Activated CD4-positive, alpha-beta T cell treated with anti-CD3 and anti-CD28 coated beads for 36 hours (primary cell): ENCODE measurements at regions of chr1 and their contacts with region 1.

Region 1: DNA sequence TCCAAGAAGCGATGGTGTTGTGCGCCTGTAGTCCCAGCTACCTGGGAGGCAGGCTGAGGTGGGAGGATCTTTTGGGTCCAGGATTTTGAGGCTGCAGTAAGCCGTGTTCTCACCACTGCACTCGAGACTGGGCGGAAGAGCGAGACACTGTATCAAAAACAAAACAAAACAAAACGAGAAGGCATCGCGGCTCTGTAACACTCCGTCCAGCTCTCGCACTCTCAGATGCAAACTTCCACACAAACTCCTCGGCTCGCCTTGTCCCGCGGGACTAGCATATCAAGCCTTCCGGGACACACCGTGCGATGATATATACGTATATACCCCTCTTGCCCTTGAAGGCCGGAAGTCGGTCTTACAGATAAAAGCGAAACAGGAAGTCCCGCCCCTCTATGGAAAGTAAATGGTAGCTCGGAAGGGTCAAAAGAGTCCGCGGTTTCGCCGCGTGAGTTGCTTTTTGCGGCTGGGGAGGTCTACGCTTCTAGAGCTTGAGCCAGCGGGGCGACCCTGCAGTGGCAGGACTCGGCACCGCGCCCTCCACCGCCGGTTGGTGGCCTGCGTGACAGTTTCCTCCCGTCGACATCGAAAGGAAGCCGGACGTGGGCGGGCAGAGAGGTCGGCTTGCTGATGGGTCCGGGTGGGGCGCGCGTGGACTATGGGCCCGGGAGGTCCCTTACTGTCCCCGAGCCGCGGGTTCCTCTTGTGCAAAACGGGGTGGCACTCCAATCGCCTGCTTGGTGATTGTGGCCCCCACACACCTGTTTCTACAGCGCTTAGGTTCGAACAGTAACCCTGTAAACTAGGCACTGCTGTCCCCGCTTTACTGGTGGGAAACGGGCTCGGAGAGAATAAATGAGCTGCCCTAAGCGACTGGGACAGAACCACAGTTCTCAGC is at the start of gene COA6:
- DNase-seq: peak; percentile 92
- ATAC-seq: peak; percentile 89
- H3K4me3 Mint-ChIP-seq: peak within 1 kb of the TSS; percentile 98
- H3K27ac Mint-ChIP-seq: peak within 1 kb of the TSS; percentile 99
- H3K4me1 Mint-ChIP-seq: peaks cover 56% of the 10 kb centered on the region
- H3K27me3 Mint-ChIP-seq: no peaks in the 10 kb centered on the region
- total RNA-seq, gene COA6: 56.5 to 69.5 TPM

Region 2: GRCh38 chr1:232950197-232951176 is 1422.8 kb before region 1 on chr1 and contains the start of gene NTPCR:
- CTCF ChIA-PET with region 1: no interaction called
- POLR2A ChIA-PET with region 1: no interaction called
- intact Hi-C with region 1: loop called in 1 of 2 experiments (anchors 10 kb)
- DNase-seq: peak; percentile 98
- ATAC-seq: peak; percentile 91
- H3K4me3 Mint-ChIP-seq: peak within 1 kb of the TSS; percentile 90
- H3K27ac Mint-ChIP-seq: peak within 1 kb of the TSS; percentile 95
- H3K4me1 Mint-ChIP-seq: peaks cover 35% of the 10 kb centered on the region
- H3K27me3 Mint-ChIP-seq: no peaks in the 10 kb centered on the region
- total RNA-seq, gene NTPCR: 37.4 to 51.9 TPM

Region 3: DNA sequence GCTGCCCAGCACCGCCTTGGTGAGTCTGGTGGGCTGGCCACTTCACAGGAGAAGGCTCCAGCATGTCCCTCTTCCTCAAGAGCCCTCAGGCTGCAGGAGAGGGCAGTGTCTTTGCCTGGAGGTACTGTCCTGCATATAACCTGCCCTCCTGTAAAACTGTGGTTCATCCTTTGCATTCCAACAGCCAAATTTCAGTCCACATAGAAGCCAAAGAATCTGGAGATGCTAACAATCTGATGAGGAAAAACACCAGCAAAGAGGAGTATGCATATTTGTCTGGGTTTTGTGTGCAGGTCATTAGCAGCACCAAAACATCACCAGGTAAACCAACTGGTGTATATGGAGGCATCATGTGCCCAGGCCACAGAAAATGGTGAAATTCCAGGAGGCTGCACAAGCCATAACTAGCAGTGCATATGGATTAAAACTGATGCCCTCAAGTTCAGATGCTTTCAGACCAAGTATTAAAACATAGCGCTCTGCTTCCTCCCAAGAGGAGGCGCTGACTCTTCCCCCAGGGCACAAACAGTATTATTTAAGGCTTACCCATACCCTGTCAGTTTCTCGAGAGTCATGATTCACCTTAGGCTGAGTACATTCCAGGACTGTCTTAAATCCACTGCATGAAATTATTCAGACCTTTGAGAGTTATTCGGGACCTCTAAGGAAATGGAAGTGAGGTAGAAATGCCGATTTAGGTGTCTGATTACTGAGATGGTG is 150.6 kb before region 1 on chr1:
- CTCF ChIA-PET with region 1: no interaction called
- POLR2A ChIA-PET with region 1: no interaction called
- intact Hi-C with region 1: no loop called
- DNase-seq: no peak
- ATAC-seq: no peak
- H3K4me3 Mint-ChIP-seq: no peak overlapping the region
- H3K27ac Mint-ChIP-seq: no peak overlapping the region
- H3K4me1 Mint-ChIP-seq: no peaks in the 10 kb centered on the region
- H3K27me3 Mint-ChIP-seq: no peaks in the 10 kb centered on the region

Region 4: DNA sequence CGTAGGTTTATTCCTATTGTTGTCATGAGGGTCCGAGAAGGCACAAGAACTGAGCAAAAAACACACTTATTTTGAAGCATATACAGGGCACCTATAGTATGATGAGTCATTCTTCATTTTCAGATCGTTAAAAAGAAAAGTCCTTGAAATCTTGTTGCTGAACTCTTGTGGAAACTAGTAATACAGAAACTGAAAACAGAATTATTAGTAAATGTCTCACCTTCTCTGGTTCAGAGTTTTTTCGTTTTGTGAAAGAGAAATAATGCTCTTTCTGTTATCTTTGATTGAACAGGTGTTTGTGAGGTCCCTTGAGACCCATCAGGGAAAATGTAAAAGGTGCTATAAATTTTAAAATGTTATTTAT is 102.1 kb before region 1 on chr1:
- CTCF ChIA-PET with region 1: no interaction called
- POLR2A ChIA-PET with region 1: no interaction called
- intact Hi-C with region 1: loop called (anchors 1 to 5 kb)
- DNase-seq: no peak
- ATAC-seq: peak; percentile 93
- H3K4me3 Mint-ChIP-seq: no peak overlapping the region
- H3K27ac Mint-ChIP-seq: no peak overlapping the region
- H3K4me1 Mint-ChIP-seq: peaks cover 30% of the 10 kb centered on the region
- H3K27me3 Mint-ChIP-seq: peaks cover 19% of the 10 kb centered on the region

Region 5: DNA sequence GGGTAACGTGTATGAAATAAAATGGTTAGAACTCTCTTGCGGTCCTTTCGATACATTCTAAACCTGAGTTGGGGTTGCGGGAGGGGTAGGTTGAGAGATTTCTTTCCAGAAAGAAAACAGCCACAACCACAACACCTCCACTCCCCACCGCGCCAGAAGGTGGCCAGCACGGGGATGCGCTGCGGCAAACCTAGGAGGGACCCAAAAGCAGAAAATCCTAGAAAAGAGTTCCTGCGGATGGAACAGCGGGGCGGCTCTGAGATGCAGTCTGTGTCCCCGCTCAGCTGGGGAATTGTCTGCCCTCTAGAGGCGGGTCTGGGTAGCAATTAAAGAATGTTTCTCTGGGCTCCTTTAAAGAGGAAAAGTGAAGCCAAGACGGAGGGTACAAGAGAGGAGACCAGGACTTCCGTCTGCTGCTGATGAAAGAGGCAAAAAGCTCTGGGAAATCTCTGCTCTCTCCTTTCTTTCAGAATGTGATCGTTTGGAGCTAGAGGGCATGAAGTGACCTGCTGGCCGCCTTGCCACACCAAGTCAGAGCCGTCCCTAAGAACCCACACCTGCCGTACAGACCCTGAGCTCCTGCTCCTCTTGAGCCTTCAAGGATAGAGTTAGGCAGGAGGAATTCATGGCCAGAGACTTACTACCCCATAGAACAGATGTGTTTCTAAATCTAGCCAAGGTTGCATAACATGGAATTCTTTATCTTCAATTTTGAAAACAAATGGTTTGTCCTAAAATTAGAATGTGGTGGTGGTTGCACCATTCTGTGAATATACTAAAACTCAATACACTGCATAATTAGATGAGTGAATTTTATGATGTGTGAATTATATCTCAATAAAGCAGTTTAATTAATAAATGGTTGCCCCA is 46.6 kb before region 1 on chr1:
- CTCF ChIA-PET with region 1: interaction called, 3 read pairs
- POLR2A ChIA-PET with region 1: interaction called, 3 read pairs
- intact Hi-C with region 1: loop called (anchors 1 to 5 kb)
- DNase-seq: peak; percentile 83
- ATAC-seq: peak; percentile 88
- H3K4me3 Mint-ChIP-seq: peak overlapping the region; percentile 69
- H3K27ac Mint-ChIP-seq: peak overlapping the region; percentile 61
- H3K4me1 Mint-ChIP-seq: peaks cover 22% of the 10 kb centered on the region
- H3K27me3 Mint-ChIP-seq: peaks cover 16% of the 10 kb centered on the region

Region 6: DNA sequence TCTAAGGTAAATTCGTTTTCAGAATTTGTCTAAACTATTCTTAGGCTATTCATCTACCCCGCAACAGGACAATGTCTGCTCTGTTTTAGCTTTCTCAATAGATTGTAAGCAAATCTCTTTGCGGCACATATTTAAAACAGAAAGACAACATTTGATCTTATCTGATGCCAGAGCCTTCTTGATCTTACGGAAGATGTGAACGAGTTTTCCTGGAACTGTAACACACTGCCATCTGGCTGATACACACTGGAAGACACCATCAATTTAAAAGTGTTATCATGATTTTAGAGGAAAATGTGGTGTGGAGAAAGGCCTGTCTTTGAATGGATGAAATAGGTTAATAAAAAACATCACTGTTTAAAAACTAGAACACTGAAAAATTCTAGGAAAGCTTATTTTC is 36.0 kb after region 1 on chr1:
- CTCF ChIA-PET with region 1: interaction called, 5 read pairs
- POLR2A ChIA-PET with region 1: interaction called, 4 read pairs
- intact Hi-C with region 1: loop called (anchors 1 to 2 kb)
- DNase-seq: peak; percentile 21
- ATAC-seq: peak; percentile 53
- H3K4me3 Mint-ChIP-seq: peak overlapping the region; percentile 51
- H3K27ac Mint-ChIP-seq: peak overlapping the region; percentile 89
- H3K4me1 Mint-ChIP-seq: peaks cover 42% of the 10 kb centered on the region
- H3K27me3 Mint-ChIP-seq: no peaks in the 10 kb centered on the region

Region 7: GRCh38 chr1:234599617-234600417 is 226.5 kb after region 1 on chr1:
- CTCF ChIA-PET with region 1: no interaction called
- POLR2A ChIA-PET with region 1: no interaction called
- intact Hi-C with region 1: loop called in 1 of 2 experiments (anchors 2 kb)
- DNase-seq: peak; percentile 86
- ATAC-seq: peak; percentile 73
- H3K4me3 Mint-ChIP-seq: peak overlapping the region; percentile 97
- H3K27ac Mint-ChIP-seq: peak overlapping the region; percentile 91
- H3K4me1 Mint-ChIP-seq: peaks cover 49% of the 10 kb centered on the region
- H3K27me3 Mint-ChIP-seq: no peaks in the 10 kb centered on the region

Region 8: GRCh38 chr1:234683861-234684632 is 310.7 kb after region 1 on chr1:
- CTCF ChIA-PET with region 1: no interaction called
- POLR2A ChIA-PET with region 1: no interaction called
- intact Hi-C with region 1: no loop called
- DNase-seq: no peak
- ATAC-seq: no peak
- H3K4me3 Mint-ChIP-seq: no peak overlapping the region
- H3K27ac Mint-ChIP-seq: no peak overlapping the region
- H3K4me1 Mint-ChIP-seq: no peaks in the 10 kb centered on the region
- H3K27me3 Mint-ChIP-seq: no peaks in the 10 kb centered on the region

Region 9: GRCh38 chr1:235024711-235025421 is 651.6 kb after region 1 on chr1:
- CTCF ChIA-PET with region 1: no interaction called
- POLR2A ChIA-PET with region 1: no interaction called
- intact Hi-C with region 1: no loop called
- DNase-seq: no peak
- ATAC-seq: peak; percentile 53
- H3K4me3 Mint-ChIP-seq: no peak overlapping the region
- H3K27ac Mint-ChIP-seq: no peak overlapping the region
- H3K4me1 Mint-ChIP-seq: peaks cover 18% of the 10 kb centered on the region
- H3K27me3 Mint-ChIP-seq: no peaks in the 10 kb centered on the region